GM18951 (cell line): ENCODE measurements at regions of chr2 and their contacts with region 1.

Region 1: DNA sequence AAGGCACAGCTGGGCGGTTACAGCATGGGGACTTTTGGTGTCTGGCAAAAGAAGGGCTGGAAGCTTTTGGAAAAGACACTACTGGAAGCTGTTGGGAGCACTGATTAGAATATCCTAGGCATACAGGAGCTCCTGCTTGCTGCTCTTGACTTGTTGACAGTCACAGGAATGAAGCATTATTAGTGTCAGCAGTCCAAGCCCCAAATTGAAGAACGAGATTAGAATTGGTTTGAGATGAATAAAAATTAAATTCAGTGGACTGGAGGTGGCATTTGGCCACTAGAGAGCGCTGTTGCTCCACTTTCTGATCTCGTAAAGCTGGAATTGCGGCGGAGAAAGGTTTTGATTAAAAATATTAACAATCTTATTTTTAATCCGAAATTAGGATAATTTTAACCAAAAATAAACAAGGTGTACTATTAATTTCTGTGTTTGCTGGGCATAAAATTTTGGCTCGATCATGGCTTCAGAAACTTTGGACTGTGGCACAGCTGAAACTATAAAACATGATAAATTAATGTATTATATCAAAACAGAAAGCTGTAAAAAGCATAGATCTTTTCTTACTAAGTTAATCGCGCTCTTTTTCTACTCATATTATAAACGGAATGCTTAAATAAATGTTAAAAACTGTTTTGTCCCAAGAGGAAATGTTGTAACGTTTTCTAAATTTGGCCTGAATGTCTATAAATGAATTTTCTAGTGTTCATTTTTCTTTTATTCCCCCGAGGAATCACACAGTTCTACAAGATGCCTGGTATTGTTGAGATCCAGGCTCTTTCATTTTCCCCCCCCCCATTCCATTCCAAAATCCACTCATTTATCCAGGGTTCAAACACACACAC is 2.4 kb upstream of the HOXD8 start:
- POLR2A ChIP-seq: no peak

Region 2: DNA sequence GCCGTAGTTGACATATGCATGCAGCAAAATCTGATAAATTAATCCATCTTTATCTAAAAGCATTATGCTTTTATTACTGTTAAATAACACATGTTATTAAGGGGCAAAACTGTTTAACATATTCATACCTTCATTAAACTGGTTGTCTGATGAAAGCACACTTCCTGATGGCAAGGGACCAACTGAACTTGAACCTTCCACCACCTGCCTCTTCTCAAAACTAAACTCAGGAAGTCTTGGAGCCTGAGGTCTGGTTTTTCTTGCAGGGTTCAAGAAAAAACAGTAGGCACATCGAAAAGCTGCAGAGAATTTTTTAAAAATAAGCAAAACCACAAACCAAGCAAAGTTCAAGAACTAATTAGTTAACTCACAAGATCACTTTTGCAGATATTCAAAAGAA is 189.9 kb before region 1 on chr2:
- in situ Hi-C with region 1: no loop called
- POLR2A ChIP-seq: no peak

Region 3: DNA sequence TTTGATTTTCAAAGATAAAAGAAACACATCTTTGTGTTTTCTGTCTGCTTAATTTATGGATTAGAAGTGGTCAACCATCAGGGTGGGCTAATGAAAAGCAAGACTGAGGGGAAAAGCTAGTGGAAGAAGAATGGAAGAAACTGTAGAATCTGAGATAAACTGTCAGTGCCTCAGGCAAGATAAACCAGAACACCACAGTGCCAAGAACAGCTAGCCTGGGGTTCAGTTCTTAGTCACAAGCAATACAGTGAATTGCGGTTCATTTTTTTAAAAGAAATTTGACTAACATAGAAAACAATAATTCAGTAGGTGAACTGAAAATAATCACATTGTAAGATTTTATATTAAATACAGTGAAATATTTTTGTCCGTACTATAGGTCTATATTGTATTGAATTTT is 103.1 kb before region 1 on chr2:
- in situ Hi-C with region 1: no loop called
- POLR2A ChIP-seq: no peak

Region 4: GRCh38 chr2:176380341-176380740 is 253.2 kb after region 1 on chr2:
- in situ Hi-C with region 1: no loop called
- POLR2A ChIP-seq: no peak

Region 5: DNA sequence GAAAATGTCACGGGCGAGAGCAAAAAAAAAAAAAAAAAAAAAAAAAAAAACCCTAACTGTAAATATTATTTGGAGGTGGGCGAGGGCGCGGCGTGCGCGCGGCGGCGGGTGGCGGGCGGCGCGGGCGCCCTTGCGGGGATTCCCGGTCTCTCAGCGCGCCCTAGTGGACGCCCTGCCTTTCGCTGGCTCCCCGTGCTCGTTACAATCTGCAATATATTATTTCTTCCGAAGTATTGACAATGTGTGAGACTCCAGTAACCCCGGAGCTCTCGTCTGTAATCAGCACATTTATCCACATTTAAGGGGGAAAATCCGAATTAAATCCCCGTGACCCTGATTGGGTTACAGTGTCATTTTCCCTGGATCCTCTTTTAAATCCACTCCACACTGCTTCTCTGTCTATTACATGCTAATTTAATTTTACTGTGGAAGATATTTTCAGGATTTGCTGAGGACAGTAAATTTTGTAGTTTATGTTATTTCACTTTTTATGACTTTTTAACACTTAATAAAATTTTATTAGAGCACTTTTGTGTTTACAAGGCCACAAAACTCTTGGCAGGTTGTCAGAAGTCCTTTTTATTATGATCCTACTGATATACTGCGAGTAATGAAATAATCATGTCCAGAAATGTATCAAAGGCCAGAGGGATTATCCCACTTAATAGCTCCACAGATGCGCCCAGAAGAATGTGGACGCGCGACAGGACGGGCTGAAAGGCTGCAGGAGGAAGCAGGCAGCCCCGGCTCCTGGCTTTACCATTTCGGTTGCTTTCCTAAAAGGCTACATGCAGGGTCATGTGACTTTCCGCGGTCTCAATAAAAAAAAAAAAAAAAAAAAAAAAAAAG is 511.2 kb after region 1 on chr2:
- in situ Hi-C with region 1: loop called (anchors 10 kb)
- POLR2A ChIP-seq: no peak